ENCODE measurements at regions of chr2 and their contacts with region 1.

Region 1: DNA sequence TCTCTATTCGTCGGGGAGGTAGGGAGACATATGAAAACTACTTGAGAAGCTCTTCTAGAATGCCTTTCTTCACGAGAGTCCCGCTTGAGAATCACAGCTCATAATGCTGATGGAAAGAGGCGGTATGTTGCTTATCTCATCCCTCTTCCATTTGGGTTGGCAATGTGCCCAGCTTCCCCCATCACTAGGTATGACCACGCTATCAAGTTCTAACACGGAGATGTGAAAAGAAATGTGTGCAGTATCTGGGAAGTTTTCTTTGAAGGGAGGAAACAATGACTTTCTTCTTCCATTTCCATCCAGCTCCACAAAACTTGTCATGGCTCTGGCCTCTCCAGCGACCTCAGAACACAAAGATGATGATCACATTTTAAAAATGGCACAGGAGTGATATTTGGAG is 742.4 kb downstream of the DCDC2C start:
- DNase-seq: no peak

Region 2: DNA sequence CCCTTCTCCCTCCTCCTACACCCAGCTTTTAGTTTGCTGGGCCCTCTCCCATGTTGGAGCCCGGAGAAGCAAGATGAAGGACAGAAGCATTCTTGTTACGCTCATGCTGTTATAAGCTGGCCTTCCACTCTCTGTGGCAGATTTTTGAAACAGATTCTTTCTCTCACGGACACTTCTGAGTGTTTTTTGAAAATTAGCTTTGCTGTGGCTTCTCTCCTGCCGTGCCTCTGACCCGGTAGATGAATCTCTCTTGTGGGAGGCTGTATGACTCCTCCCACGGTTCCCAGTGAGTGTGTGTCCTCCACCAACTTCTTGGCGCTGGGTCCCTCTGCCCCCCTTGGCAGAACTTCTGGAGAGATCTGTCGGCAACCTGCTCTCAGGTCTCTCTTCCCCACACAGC is 1845.5 kb before region 1 on chr2:
- intact Hi-C with region 1: loop called in 1 of 2 experiments (anchors 5 kb)
- DNase-seq: no peak

Region 3: GRCh38 chr2:4291430-4291829 is 154.4 kb before region 1 on chr2:
- intact Hi-C with region 1: no loop called
- DNase-seq: no peak

Region 4: DNA sequence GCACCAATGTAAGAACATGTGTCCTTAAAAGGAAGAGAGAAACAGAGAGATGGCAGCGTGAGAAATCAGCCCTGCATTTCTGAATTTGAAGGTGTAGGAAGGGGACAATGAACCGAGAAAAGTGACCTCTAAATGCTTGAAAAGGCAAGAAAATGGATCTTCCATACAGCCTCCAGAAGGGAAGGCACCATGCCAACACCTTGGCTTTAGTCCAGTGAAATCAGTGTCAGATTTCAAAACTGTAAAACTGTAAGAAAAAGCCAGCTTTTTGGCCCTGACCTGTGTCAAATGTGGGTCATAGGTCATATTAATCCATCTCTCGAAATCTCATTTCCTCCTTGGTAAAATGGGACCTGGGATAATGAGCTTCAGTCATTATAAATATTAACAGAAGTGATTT is 19.9 kb after region 1 on chr2:
- intact Hi-C with region 1: loop called in 1 of 2 experiments (anchors 1 kb)
- DNase-seq: no peak